ENCODE measurements at regions of chr15 and their contacts with region 1.

Region 1: DNA sequence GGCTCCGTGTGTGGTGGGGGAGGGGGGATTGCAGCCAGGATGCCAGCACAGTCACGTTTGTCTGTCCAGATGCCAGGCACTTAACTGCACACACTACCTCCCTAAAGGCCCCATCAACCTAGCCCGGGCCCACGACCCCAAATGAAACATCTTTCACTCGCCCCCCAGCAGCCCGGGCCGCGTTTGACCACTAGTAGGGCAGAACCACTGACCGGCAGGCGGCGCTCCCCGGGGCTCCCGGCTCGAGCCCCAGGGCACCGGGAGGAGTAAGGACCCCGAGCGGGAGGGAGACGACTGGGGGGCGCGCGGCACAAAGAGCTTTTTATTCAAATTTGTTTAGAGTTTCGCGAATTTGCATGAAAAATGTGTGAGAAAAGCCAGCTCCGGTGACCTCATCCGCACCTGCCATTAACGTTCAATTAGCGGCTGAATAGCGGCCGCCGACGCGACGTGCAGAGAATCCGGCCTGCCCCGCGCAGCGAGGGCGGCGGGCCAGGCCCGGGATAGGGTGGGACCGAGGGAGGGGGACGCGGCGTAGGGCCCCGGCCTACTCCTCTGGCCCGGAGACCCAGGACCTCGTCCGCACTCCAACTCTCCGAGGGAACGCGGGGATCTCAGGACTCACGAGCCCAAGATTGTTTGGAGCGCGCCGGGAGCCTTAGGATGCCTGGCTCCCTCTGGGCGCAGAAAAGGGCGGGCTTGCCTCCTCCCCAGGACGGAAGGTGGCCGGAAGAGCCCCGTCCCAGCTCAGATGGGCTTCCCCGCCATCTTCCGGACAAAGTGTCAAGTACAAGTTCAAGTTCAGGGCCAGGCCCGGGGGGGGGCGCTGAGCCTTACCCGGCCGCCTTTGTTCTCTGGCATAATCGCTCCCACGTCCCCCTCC is 64.9 kb upstream of the POLG start:
- DNase-seq: peak; percentile 84 to 90
- ATAC-seq: peak; percentile 79 to 87
- H3K4me3 ChIP-seq: peak overlapping the region; percentile 79
- H3K27ac ChIP-seq: peak overlapping the region; percentile 86 to 87
- H3K4me1 ChIP-seq: peaks cover 24% of the 10 kb centered on the region
- CTCF ChIP-seq: peak; percentile 62
- EP300 ChIP-seq: no peak
- POLR2A ChIP-seq: peak; percentile 41; the same call in 1 of the 2 replicates
- RAD21 ChIP-seq: peak; percentile 31 to 37; a peak in 2 of 5 replicates

Region 2: GRCh38 chr15:89367485-89368451 is 31.7 kb before region 1 on chr15:
- CTCF ChIA-PET with region 1: interaction called, 494 read pairs
- POLR2A ChIA-PET with region 1: no interaction called
- DNase-seq: peak; percentile 64 to 78
- ATAC-seq: peak; percentile 20 to 70; a peak in 4 of 6 replicates
- H3K4me3 ChIP-seq: peak overlapping the region; percentile 53
- H3K27ac ChIP-seq: peak overlapping the region; percentile 32 to 62; a peak in 4 of 6 replicates
- H3K4me1 ChIP-seq: peaks cover 9% of the 10 kb centered on the region; the same call in 2 of the 3 replicates
- CTCF ChIP-seq: no peak
- EP300 ChIP-seq: no peak
- POLR2A ChIP-seq: no peak
- RAD21 ChIP-seq: no peak

Region 3: GRCh38 chr15:89378296-89379151 is 21.0 kb before region 1 on chr15:
- CTCF ChIA-PET with region 1: interaction called, 17 read pairs
- POLR2A ChIA-PET with region 1: no interaction called
- DNase-seq: no peak
- ATAC-seq: no peak
- H3K4me3 ChIP-seq: no peak overlapping the region
- H3K27ac ChIP-seq: no peak overlapping the region
- H3K4me1 ChIP-seq: peaks cover 3% of the 10 kb centered on the region; the same call in 2 of the 3 replicates
- CTCF ChIP-seq: no peak
- EP300 ChIP-seq: no peak
- POLR2A ChIP-seq: no peak
- RAD21 ChIP-seq: no peak

Region 4: GRCh38 chr15:89383365-89384175 is 15.9 kb before region 1 on chr15:
- CTCF ChIA-PET with region 1: interaction called, 50 read pairs
- POLR2A ChIA-PET with region 1: no interaction called
- DNase-seq: peak in 1 of 2 experiments; percentile 56
- ATAC-seq: peak in 1 of 2 experiments; percentile 21; a peak in 2 of 6 replicates
- H3K4me3 ChIP-seq: no peak overlapping the region
- H3K27ac ChIP-seq: no peak overlapping the region
- H3K4me1 ChIP-seq: peaks cover 10% of the 10 kb centered on the region; the same call in 2 of the 3 replicates
- CTCF ChIP-seq: no peak
- EP300 ChIP-seq: no peak
- POLR2A ChIP-seq: no peak
- RAD21 ChIP-seq: no peak